ENCODE measurements at regions of chr12 and their contacts with region 1.

Region 1: DNA sequence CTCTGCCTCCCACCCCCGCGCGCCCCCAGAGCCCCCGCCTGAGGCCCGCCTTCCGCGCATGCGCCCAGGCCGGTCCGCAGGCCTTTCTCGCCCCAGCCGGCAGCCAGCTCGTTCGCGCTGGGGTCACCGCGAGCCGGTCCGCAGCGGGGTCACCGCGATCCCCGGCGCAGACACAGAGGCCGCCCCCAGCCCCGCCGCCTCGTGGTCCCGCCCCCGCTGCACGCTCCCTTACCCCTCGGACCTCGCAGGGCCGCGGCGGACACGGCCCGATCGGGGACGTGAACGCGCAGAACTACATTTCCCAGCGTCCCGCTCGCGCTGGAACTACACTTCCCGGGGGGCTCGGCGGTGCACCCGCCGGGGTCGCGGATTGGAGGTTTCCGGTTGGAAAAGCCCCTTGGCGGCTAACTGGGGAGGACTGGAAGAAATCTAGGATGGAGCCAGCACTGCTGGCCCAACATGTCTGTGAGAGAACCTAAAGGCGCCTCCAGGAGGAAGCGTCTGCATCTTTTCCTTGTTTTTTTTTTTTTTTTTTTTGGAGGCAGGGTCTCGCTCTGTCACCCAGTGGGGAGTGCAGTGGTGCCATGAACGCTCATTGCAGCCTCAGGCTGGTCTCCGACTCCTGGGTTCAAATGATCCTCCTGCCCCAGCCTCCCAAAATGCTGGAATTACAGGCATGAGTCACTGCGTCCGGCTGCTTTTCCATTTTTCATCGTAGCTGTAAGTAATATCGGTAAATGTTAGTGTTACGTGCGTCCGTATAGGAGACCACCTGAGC is at the start of gene ZNF605:
- DNase-seq: peak; percentile 72 to 89 (median 80)
- ATAC-seq: peak; percentile 96
- H3K4me3 ChIP-seq: peak within 1 kb of the TSS; percentile 100
- H3K4me3 Mint-ChIP-seq: peak within 1 kb of the TSS; percentile 90 to 97 (median 95)
- H3K27ac ChIP-seq: peak within 1 kb of the TSS; percentile 85
- H3K27ac Mint-ChIP-seq: peak within 1 kb of the TSS; percentile 83 to 96 (median 91)
- H3K4me1 ChIP-seq: peaks cover 6 to 7% of the 10 kb centered on the region in 2 donors
- H3K4me1 Mint-ChIP-seq: peaks cover 19 to 53% (median 37%) of the 10 kb centered on the region in 7 donors
- H3K27me3 ChIP-seq: no peaks in the 10 kb centered on the region
- H3K27me3 Mint-ChIP-seq: no peaks in the 10 kb centered on the region
- total RNA-seq, gene ZNF605: 5.4 to 17.8 (median 11.8) TPM

Region 2: DNA sequence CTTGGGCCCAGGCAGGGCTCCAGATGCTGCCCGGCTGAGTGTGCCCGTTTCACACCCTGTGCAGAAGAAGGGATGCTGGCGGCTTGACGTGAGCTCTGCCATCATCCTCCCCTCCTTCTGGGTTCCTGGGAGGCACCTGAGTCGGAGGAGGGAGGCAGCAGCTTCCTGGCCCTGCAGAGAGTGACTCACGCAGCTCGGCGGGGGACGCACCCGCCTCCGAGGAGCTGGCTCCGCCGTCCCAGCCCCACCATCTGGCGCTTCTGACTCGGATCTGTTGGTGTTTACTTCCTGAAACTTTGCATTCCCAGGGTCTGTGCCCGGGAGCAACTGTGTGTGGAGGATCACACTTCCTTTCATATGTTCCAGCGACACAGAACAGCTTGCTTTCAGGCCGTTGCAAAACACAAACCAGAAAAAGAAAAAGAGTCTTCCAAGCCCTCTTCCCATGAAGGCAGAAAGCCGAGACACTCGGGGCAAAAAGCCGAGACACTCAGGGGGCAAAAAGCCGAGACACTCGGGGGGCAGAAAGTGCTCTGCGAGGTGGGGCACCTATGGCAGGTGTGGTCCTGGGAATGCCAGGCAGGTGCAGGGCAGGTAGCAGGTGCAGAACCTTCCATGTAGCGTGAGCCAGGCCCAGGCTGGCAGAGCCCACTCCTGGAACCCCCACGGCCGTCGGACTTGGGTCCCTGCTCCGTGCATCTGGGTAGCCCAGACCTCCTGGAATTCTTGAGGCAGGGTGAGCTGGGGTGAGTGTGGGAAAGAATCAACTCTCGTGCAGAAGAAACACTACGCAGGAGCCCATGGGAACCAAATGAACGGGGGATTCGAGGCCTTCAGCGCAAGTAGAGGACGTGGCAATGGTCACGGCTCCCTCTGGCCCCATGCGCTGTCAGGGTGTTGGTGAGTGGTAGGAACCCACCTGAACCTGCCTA is 599.2 kb before region 1 on chr12:
- CTCF ChIA-PET with region 1: no interaction called
- POLR2A ChIA-PET with region 1: no interaction called
- intact Hi-C with region 1: no loop called
- DNase-seq: no peak
- ATAC-seq: no peak
- H3K4me3 ChIP-seq: no peak overlapping the region
- H3K4me3 Mint-ChIP-seq: no peak overlapping the region
- H3K27ac ChIP-seq: no peak overlapping the region
- H3K27ac Mint-ChIP-seq: no peak overlapping the region
- H3K4me1 ChIP-seq: no peaks in the 10 kb centered on the region
- H3K4me1 Mint-ChIP-seq: no peaks in the 10 kb centered on the region
- H3K27me3 ChIP-seq: no peaks in the 10 kb centered on the region
- H3K27me3 Mint-ChIP-seq: peaks cover 0 to 8% (median 0%) of the 10 kb centered on the region in 5 donors

Region 3: DNA sequence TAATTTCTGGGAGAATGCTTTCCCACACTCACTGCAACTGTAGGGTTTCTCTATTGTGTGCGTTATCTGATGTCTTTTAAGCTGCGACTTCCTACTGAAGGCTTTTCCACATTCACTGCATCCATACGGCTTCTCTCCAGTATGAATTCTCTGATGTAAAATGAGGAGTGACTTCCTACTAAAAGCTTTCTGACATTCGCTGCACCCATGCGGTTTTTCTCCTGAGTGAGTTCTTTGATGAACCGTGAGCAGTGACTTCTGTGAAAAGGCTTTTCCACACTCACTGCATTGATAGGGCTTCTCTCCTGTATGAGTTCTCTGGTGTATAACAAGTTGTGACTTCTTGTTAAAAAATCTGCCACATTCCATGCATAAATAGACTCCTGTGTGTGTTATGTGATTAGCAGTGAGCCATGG is 29.8 kb before region 1 on chr12:
- CTCF ChIA-PET with region 1: no interaction called
- POLR2A ChIA-PET with region 1: no interaction called
- intact Hi-C with region 1: no loop called
- DNase-seq: no peak
- ATAC-seq: no peak
- H3K4me3 ChIP-seq: peak overlapping the region; percentile 6
- H3K4me3 Mint-ChIP-seq: no peak overlapping the region
- H3K27ac ChIP-seq: no peak overlapping the region
- H3K27ac Mint-ChIP-seq: no peak overlapping the region
- H3K4me1 ChIP-seq: no peaks in the 10 kb centered on the region
- H3K4me1 Mint-ChIP-seq: no peaks in the 10 kb centered on the region
- H3K27me3 ChIP-seq: no peaks in the 10 kb centered on the region
- H3K27me3 Mint-ChIP-seq: no peaks in the 10 kb centered on the region

Region 4: DNA sequence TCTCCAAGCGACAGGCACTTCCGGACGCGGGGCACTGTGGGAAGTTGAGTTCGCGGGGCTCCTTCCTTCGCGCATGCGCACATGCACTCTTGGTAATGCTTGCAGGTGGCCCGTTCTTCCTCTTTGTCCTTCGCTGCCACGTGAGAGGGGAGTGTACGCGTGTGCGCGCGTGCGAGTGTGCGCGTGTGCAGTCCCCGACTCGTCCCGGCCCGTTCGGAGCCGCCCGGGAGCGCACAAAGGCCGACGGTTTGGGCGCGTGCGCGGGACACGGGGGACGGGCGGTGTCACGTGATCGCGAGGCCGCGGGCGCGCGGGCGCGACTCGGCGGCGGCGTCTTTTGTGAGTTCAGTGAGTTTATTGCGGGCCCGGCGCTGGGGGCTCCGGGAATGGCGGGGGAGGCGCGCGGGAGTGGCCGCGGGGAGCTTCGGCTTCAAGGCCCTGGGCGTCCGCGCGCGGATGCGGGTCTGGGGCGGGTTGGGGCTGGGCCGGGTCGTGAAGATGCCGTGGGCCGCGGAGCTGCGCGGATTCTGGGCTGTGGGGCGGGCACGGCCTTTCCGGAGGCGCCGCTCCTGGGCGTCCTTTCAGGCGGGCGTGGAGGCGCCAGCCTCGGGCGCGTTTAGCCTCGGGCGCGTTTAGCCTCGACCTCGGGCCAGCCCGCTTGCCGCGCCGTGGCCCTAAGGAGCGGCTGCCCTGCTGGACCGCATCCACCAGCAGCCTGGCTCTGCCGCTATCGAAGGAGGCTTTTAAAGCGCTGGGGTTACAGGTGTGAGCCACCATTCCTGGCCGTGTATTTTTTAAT is 81.2 kb after region 1 on chr12 and contains the start of gene ZNF84:
- CTCF ChIA-PET with region 1: no interaction called
- POLR2A ChIA-PET with region 1: no interaction called
- intact Hi-C with region 1: loop called (anchors 1 kb)
- DNase-seq: peak; percentile 93 to 99 (median 97)
- ATAC-seq: peak; percentile 96
- H3K4me3 ChIP-seq: peak within 1 kb of the TSS; percentile 65
- H3K4me3 Mint-ChIP-seq: peak within 1 kb of the TSS; percentile 78 to 96 (median 94)
- H3K27ac ChIP-seq: peak within 1 kb of the TSS; percentile 94
- H3K27ac Mint-ChIP-seq: peak within 1 kb of the TSS; percentile 87 to 99 (median 94)
- H3K4me1 ChIP-seq: peaks cover 0 to 4% of the 10 kb centered on the region in 2 donors
- H3K4me1 Mint-ChIP-seq: peaks cover 0 to 37% (median 13%) of the 10 kb centered on the region in 7 donors
- H3K27me3 ChIP-seq: no peaks in the 10 kb centered on the region
- H3K27me3 Mint-ChIP-seq: peaks cover 0 to 9% (median 3%) of the 10 kb centered on the region in 5 donors
- total RNA-seq, gene ZNF84: 27.4 to 52.7 (median 31.6) TPM

Region 5: GRCh38 chr12:133130038-133130807 is 174.0 kb after region 1 on chr12 and contains the starts of genes ZNF10 and ZNF891:
- CTCF ChIA-PET with region 1: no interaction called
- POLR2A ChIA-PET with region 1: no interaction called
- intact Hi-C with region 1: loop called (anchors 1 kb)
- DNase-seq: peak; percentile 96 to 99 (median 98)
- ATAC-seq: peak; percentile 93
- H3K4me3 ChIP-seq: peak within 1 kb of the TSS; percentile 62
- H3K4me3 Mint-ChIP-seq: peak within 1 kb of the TSS; percentile 90 to 99 (median 94)
- H3K27ac ChIP-seq: peak within 1 kb of the TSS; percentile 98
- H3K27ac Mint-ChIP-seq: peak within 1 kb of the TSS; percentile 97 to 100 (median 99)
- H3K4me1 ChIP-seq: peaks cover 0 to 7% of the 10 kb centered on the region in 2 donors
- H3K4me1 Mint-ChIP-seq: peaks cover 15 to 51% (median 27%) of the 10 kb centered on the region in 7 donors
- H3K27me3 ChIP-seq: no peaks in the 10 kb centered on the region
- H3K27me3 Mint-ChIP-seq: no peaks in the 10 kb centered on the region
- total RNA-seq, gene ZNF10: 5.2 to 35.0 (median 29.2) TPM
- total RNA-seq, gene ZNF891: 2.4 to 7.9 (median 6.6) TPM

Region 6: DNA sequence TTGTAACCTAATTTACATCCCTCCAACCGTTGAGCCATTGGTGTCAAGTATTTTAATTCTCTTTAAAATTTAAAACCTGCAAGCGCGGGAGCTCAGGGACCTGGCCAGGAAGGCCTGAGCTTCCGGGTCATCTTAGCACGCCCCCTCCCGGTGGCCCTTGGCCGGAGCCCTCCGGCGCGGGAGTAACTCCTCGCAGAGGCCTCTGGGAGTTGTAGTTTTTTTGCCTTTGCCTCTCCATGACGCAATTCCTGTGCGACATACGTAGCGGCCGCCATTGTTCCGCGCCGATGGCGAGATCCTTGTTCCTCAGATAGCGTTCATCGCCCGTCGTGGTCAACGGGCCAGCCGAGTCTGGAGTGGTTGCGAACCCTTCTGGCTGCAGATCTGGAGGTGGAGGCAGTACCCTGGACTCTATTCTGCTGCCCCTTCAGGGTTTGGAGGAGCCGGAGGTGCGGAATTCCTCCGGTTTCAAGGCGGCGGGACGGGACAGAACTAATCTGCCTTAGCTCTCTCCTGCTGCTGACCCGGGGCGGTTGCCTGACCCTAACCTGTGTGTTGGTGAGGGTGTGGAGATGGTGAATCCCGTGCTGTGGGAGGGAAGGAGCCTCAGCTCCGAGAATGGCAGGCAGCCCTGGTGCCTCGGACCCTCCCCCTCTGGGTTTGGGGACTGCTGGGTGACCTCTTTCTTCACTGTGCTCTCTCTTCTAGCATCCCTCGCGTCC is 225.2 kb after region 1 on chr12 and contains the start of gene ZNF268:
- CTCF ChIA-PET with region 1: no interaction called
- POLR2A ChIA-PET with region 1: no interaction called
- intact Hi-C with region 1: loop called in 1 of 2 experiments (anchors 1 kb)
- DNase-seq: peak; percentile 75 to 90 (median 86)
- ATAC-seq: peak; percentile 99
- H3K4me3 ChIP-seq: peak within 1 kb of the TSS; percentile 100
- H3K4me3 Mint-ChIP-seq: peak within 1 kb of the TSS; percentile 90 to 99 (median 95)
- H3K27ac ChIP-seq: peak within 1 kb of the TSS; percentile 84
- H3K27ac Mint-ChIP-seq: peak within 1 kb of the TSS; percentile 85 to 97 (median 92)
- H3K4me1 ChIP-seq: peaks cover 7 to 9% of the 10 kb centered on the region in 2 donors
- H3K4me1 Mint-ChIP-seq: peaks cover 16 to 34% (median 31%) of the 10 kb centered on the region in 7 donors
- H3K27me3 ChIP-seq: no peaks in the 10 kb centered on the region
- H3K27me3 Mint-ChIP-seq: no peaks in the 10 kb centered on the region
- total RNA-seq, gene ZNF268: 13.6 to 38.6 (median 18.6) TPM